ENCODE measurements at regions of chr4 and their contacts with region 1.

Region 1: GRCh38 chr4:168917138-168917779 is 92.8 kb downstream of the CBR4 start:
- DNase-seq: no peak
- ATAC-seq: peak in 2 of 4 donors; percentile 50 to 59
- H3K4me3 ChIP-seq: no peak overlapping the region
- H3K27ac ChIP-seq: peak overlapping the region; percentile 46
- H3K4me1 ChIP-seq: no peaks in the 10 kb centered on the region
- H3K27me3 ChIP-seq: no peaks in the 10 kb centered on the region
- CTCF ChIP-seq: peak; percentile 70

Region 2: DNA sequence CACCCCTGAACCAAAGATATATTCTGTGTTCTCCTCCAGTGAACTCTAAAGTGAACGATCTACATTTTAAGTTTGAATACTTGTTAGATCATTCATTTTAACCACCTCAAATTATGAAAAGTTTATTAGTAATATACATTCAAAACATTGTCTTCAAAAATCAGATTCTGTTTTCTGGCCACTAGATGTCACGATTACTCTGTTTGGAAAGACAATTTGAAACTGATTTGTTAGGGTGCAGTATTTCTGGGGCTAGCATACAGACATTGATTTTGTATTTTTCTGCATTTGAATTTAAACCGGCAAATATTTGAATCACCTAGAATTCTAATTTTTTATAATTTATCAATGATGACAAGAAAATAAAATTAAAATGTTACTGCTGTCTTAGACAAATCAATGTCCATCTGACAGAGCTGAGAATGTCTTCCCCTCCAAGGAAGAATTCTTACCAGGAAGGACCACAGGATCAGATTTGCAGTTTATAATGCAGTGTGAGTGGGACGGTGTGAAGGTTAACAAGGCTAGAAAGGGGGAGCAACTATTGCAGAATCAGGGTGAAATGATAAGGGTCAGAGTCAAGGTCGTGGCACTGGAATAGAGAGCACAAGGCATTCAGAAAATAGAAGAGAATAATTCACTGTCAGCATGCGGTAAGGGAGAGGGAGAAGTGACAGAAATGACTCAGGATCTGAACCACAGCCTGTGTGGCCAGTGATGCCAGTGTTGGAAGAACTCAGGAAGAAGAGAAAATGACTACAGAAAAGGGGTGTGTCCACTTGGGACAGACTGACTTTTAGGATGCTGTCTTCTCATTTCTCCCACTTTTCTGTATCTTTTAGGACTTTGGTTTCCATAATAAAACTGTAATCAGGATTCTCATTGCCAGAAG is 733.3 kb before region 1 on chr4:
- intact Hi-C with region 1: loop called (anchors 5 to 10 kb)
- DNase-seq: no peak
- ATAC-seq: peak; percentile 50 to 77 (median 64)
- H3K4me3 ChIP-seq: no peak overlapping the region
- H3K27ac ChIP-seq: no peak overlapping the region
- H3K4me1 ChIP-seq: no peaks in the 10 kb centered on the region
- H3K27me3 ChIP-seq: no peaks in the 10 kb centered on the region
- CTCF ChIP-seq: peak; percentile 74

Region 3: GRCh38 chr4:168514249-168514852 is 402.9 kb before region 1 on chr4:
- intact Hi-C with region 1: loop called in 1 of 2 experiments (anchors 5 kb)
- DNase-seq: no peak
- ATAC-seq: no peak
- H3K4me3 ChIP-seq: peak overlapping the region; percentile 3
- H3K27ac ChIP-seq: no peak overlapping the region
- H3K4me1 ChIP-seq: peaks cover 30% of the 10 kb centered on the region
- H3K27me3 ChIP-seq: no peaks in the 10 kb centered on the region
- CTCF ChIP-seq: peak; percentile 58

Region 4: GRCh38 chr4:168710353-168710946 is 206.8 kb before region 1 on chr4:
- intact Hi-C with region 1: loop called (anchors 1 to 5 kb)
- DNase-seq: no peak
- ATAC-seq: peak; percentile 58 to 89 (median 69)
- H3K4me3 ChIP-seq: no peak overlapping the region
- H3K27ac ChIP-seq: peak overlapping the region; percentile 38
- H3K4me1 ChIP-seq: peaks cover 18% of the 10 kb centered on the region
- H3K27me3 ChIP-seq: no peaks in the 10 kb centered on the region
- CTCF ChIP-seq: peak; percentile 71

Region 5: DNA sequence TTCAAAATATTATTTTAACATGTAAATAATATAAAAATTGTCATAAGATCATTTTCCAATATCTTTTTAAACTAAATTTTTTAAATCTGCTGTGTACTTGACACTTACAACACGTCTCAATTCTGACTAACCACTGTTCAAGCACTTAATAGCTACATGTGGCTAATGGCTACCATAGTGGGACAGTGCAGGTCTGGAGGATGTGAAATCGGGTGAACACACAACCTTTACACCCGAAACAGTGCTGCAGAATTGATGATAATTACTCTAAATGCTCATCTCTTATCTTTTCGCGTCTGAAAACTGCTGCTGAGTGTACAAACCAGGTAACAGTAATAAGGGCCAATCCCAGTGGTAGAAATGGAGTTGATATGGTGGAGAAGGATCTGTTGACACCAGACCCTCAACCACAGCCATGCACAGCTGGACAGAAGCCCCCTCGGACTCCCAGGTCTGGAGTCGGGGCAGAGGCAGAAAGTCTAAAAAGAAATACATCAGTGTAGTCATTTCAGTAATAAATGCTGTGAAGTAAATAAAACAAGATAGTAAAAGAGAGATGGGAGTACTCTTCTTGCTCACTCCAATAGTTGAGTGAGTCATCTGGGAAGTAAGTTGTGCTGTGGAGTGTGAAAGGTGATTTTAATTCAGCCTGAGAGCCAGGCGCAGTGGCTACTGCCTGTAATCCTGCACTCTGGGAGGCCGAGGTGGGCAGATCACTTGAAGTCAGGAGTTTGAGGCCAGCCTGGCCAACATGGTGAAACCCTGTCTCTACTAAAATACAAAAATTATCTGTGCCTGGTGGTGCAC is 57.2 kb before region 1 on chr4:
- intact Hi-C with region 1: no loop called
- DNase-seq: no peak
- ATAC-seq: no peak
- H3K4me3 ChIP-seq: no peak overlapping the region
- H3K27ac ChIP-seq: peak overlapping the region; percentile 25
- H3K4me1 ChIP-seq: peaks cover 19% of the 10 kb centered on the region
- H3K27me3 ChIP-seq: no peaks in the 10 kb centered on the region
- CTCF ChIP-seq: no peak

Measured in psoas muscle (tissue), 8 donors.